Posterior cingulate gyrus (tissue), 11 donors: ENCODE measurements at regions of chr1 and their contacts with region 1.

Region 1: GRCh38 chr1:75615613-75616435 is 4.9 kb upstream of the SLC44A5 start:
- DNase-seq: peak in 9 of 10 donors; percentile 12 to 89 (median 44)

Region 2: DNA sequence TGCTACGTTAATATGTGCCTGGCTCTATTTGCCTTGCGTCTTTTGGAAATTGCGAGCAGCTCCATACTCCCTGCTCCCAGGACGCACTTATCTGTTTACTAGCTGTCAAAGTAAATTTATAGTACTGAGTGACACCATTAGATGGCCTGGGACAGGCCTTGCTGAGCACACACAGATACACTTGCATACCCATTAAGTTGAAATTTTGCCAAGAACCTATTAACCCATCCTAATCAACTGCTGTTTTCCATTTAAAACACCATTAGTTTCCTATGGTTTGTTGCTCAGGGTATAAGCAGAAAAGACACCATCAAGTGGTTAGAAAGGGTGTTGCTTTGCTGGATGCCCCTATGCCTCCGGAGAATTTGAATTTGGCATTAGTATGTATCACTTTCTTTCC is 192.2 kb before region 1 on chr1:
- intact Hi-C with region 1: loop called (anchors 10 kb)
- DNase-seq: no peak

Region 3: DNA sequence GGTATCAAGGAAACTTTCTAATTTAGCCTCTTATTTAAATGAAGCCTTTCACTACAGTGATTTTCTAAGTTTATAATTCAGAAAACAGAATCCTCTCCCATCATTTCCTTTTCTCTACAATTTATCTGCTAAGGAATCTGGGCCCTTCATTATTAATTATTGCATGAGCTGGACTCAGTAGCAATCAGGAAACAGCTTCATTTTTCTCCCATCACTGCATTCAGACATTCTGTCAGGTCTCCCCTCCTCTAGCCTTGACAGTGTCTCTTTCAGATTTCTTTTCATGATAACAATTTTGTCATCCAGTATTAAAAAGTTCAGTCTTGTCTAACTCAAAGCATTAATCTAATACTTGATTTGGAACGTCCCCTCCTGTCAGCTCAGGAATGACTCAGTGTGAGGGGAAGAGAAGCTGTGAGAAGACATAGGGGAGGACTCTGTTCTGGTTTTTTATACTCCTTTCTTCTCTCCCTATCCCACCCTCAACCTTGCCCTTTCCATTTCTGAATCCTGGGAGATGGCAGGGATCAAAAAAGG is 33.0 kb before region 1 on chr1:
- intact Hi-C with region 1: no loop called
- DNase-seq: no peak

Region 4: GRCh38 chr1:75600781-75601180 is 15.0 kb before region 1 on chr1:
- intact Hi-C with region 1: no loop called
- DNase-seq: no peak